Body of pancreas (tissue), 4 donors: ENCODE measurements at regions of chr9 and their contacts with region 1.

Region 1: GRCh38 chr9:136400038-136400834 is at the start of gene SNAPC4:
- DNase-seq: peak; percentile 86 to 89 (median 88)
- ATAC-seq: peak; percentile 95
- H3K4me3 ChIP-seq: peak within 1 kb of the TSS; percentile 63 to 98
- H3K27ac ChIP-seq: peak within 1 kb of the TSS in 3 of 4 donors; percentile 45 to 68 (median 46)
- H3K4me1 ChIP-seq: peaks cover 26% of the 10 kb centered on the region
- H3K27me3 ChIP-seq: no peaks in the 10 kb centered on the region
- CTCF ChIP-seq: peak; percentile 74 to 98 (median 97)
- POLR2A ChIP-seq: peak; percentile 61 to 72 (median 68)
- total RNA-seq, gene SNAPC4: 8.8 to 19.1 TPM

Region 2: DNA sequence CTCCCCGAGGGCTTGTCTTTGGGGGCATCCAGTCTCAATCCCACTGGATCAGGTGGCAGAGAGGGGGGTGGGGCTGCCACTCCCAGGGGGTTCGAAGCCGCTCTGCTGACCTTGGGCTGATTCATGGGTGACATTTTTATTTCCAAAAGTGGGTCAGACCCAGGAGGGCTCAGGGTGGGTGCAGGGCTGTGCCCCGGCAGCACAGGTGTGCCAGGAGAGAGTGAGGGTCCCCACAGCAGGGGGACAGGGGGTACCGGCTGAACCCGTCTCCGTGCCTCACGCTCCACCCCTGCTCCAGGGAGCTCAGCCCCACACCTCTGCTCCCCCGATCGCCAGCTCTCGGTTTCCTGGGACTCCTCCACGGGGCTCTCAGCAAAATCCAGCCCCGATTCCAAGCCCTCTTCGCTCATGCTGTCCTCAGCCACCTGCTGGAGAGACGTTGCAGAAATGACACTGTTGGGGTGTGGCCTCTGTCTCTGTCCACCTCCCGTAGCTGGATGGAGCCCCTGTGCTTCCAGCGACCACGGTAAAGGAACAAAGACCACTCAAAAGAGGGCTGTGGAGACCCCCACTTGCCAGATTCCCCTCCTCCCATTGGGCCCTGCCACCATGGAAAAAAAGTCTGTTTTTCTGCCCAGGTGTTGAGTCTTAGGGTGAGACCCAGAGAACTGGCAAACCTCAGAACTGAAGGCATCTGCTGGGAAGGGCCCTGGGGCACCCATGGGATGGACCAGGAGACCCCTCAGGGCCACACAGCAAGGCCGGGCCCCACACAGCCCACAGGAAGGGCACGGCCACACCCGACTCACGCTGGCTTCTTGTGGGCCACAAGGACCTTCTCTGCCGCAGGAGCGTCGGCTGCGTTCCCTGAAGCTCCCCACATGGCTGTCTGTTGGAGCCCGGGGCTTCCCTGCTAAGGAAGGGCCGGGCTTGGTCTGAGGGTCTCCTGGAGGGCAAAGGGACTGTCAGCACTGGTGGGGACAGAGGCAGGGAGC is 144.0 kb before region 1 on chr9:
- intact Hi-C with region 1: no loop called
- DNase-seq: no peak
- ATAC-seq: no peak
- H3K4me3 ChIP-seq: no peak overlapping the region
- H3K27ac ChIP-seq: no peak overlapping the region
- H3K4me1 ChIP-seq: peaks cover 22% of the 10 kb centered on the region
- H3K27me3 ChIP-seq: no peaks in the 10 kb centered on the region
- CTCF ChIP-seq: no peak
- POLR2A ChIP-seq: no peak

Region 3: GRCh38 chr9:136297016-136297691 is 103.1 kb before region 1 on chr9:
- intact Hi-C with region 1: no loop called
- DNase-seq: peak; percentile 78 to 94 (median 94)
- ATAC-seq: peak; percentile 86
- H3K4me3 ChIP-seq: peak overlapping the region in 1 of 2 donors; percentile 12
- H3K27ac ChIP-seq: peak overlapping the region; percentile 66 to 88 (median 74)
- H3K4me1 ChIP-seq: peaks cover 19% of the 10 kb centered on the region
- H3K27me3 ChIP-seq: no peaks in the 10 kb centered on the region
- CTCF ChIP-seq: no peak
- POLR2A ChIP-seq: peak in 2 of 3 donors; percentile 12 to 49

Region 4: DNA sequence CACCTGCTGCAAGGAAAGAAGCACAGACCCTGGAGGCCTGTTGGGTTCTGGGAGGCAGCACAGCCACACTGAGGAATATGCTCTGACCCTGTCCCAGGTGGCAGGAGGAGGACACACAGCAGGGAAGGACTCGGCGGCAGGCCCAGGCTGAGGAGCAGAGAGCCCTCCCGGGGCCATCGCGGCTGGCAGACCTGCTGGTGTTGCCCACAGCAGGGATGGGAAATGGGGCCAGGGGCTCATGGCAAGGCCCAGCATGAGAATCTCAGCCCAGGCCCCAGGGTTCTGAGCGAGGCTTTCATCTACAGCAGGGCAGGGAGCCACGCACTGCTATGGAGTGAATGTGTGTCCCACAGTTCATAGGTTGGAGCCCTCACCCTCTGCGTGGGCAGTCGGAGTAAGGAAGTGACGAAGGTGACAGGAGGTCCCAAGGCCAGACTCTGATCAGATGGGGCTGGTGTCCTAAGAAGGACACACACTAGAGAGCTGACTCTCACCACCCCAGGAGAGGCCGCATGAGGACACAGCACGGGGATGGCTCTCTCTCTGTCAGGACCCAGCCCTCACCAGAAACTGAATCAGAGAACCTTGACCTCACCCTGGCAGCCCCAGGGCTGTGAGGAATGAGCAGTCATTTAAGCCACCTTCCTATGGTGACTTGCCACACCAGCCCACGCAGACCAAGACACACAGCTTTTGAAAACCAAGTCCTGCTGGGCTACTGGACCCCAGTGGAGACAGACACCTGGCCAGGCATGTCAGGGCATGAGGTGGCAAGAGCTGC is 83.2 kb before region 1 on chr9:
- intact Hi-C with region 1: loop called (anchors 5 kb)
- DNase-seq: no peak
- ATAC-seq: no peak
- H3K4me3 ChIP-seq: no peak overlapping the region
- H3K27ac ChIP-seq: no peak overlapping the region
- H3K4me1 ChIP-seq: no peaks in the 10 kb centered on the region
- H3K27me3 ChIP-seq: no peaks in the 10 kb centered on the region
- CTCF ChIP-seq: no peak
- POLR2A ChIP-seq: no peak

Region 5: GRCh38 chr9:136339173-136339957 is 60.9 kb before region 1 on chr9:
- intact Hi-C with region 1: loop called (anchors 5 kb)
- DNase-seq: peak; percentile 88 to 92 (median 90)
- ATAC-seq: peak; percentile 52
- H3K4me3 ChIP-seq: no peak overlapping the region
- H3K27ac ChIP-seq: peak overlapping the region; percentile 93 to 97 (median 95)
- H3K4me1 ChIP-seq: peaks cover 58% of the 10 kb centered on the region
- H3K27me3 ChIP-seq: no peaks in the 10 kb centered on the region
- CTCF ChIP-seq: peak; percentile 94 to 98 (median 96)
- POLR2A ChIP-seq: peak; percentile 66 to 77 (median 66)

Region 6: GRCh38 chr9:136482793-136483588 is 82.8 kb after region 1 on chr9 and contains the start of gene SEC16A:
- intact Hi-C with region 1: no loop called
- DNase-seq: peak; percentile 99 to 100 (median 100)
- ATAC-seq: peak; percentile 81
- H3K4me3 ChIP-seq: peak within 1 kb of the TSS; percentile 30 to 88
- H3K27ac ChIP-seq: peak within 1 kb of the TSS; percentile 99 to 100 (median 100)
- H3K4me1 ChIP-seq: peaks cover 60% of the 10 kb centered on the region
- H3K27me3 ChIP-seq: no peaks in the 10 kb centered on the region
- CTCF ChIP-seq: no peak
- POLR2A ChIP-seq: peak; percentile 87 to 93 (median 89)
- total RNA-seq, gene SEC16A: 35.3 to 75.8 TPM